G401 (cell line): ENCODE measurements at regions of chr4 and their contacts with region 1.

Region 1: DNA sequence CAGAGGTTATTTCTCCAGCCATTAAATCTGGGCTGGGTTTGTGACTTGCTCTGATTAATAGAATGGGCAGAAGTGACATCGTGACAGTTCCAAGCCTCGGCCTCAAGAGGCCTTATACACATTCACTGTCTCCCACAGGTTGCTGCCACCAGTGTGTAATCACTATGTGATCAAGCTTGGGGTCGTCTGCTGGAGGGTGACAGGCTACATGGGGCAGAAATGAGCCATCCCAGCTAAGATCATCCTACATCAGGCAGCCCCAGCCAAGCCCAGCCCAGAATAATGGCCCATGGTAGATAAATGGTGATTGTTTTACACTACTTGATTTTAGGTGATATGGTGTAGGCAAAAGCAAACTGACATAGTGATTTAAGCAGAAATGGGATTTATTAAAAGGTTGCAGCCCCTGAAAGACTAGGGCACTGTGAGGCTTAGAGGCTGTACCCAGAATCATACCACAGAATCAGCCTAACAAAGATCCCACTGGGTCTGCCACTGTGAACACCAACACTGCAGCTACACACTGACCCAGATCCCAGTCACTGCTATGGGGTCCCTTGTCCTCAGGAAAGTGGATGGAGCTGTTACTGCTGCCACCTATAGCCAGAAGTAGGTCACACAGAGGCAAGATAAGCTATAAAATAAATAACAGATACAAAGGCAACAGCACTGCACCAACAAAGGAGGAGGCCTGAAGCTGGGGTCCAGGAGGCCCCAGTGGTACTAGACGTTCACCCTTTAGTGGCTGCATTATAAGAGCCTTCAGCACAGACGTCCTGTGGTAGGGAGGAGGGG is 159.6 kb upstream of the RBPJ start:
- DNase-seq: no peak

Region 2: DNA sequence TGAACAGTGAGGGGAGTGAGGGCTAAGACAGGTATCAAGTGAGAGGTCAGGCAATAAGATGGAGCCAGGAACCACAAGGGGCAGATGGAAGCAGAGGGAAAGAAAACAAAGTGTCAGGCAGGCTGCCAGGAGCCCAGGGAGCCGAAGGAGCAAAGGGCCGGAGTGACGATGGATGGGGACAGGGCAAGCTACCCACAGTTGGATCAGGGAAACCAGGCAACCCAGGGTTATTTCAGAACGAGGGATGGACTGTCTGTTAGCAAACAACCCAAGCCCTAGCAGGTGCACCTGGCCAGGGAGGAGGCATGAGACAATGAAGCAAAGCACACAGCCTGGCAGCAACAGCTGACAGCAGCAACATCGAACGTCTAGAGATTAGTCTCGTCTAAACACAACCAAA is 337.6 kb before region 1 on chr4:
- in situ Hi-C with region 1: no loop called
- DNase-seq: peak; percentile 72

Region 3: GRCh38 chr4:25875281-25875745 is 285.9 kb before region 1 on chr4:
- in situ Hi-C with region 1: no loop called
- DNase-seq: no peak

Region 4: GRCh38 chr4:26206339-26206738 is 45.1 kb after region 1 on chr4:
- in situ Hi-C with region 1: loop called (anchors 5 kb)
- DNase-seq: no peak